ENCODE measurements at regions of chr19 and their contacts with region 1.

Region 1: DNA sequence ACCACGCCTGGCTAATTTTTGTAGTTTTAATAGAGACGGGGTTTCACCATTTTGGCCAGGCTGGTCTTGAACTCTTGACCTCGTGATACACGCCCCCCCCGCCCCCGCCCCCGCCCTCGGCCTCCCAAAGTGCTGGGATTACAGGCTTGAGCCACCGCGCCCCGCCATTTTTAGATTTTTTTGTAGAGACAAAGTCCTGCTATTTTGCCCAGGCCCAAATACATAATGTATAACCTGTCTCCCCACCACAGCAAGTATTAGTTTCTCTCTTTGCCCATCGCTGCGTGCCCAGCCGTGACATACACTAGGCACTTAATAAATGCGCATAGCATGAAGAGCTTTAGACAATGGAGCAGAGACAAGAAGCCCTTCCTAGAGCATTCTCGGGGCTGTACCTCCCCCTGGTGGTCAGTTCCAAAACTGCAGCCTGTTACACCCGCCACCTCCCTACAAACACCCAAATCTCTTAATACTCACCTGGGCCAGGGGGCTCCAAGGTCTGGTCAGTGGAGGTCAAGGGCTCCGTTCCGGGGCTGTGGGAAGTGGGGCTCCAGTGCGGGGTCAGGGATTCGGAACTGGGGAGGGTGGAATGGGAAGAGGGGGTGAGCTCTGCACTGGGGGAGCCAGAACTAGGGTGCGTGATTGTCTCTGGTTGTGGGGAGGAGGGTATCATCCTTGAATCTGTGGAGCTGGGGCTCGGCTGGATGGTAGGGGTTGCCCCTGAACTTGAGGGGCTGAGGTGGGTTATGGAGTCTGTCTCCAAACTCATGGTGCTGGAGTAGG is 22.5 kb downstream of the IQCN start:
- DNase-seq: no peak
- H3K4me3 ChIP-seq: no peak overlapping the region
- H3K27ac ChIP-seq: no peak overlapping the region
- H3K4me1 ChIP-seq: peaks cover 5 to 39% (median 7%) of the 10 kb centered on the region in 3 donors
- H3K27me3 ChIP-seq: peaks cover 0 to 12% (median 0%) of the 10 kb centered on the region in 4 donors
- CTCF ChIP-seq: peak; percentile 89 to 98 (median 96)
- POLR2A ChIP-seq: no peak

Region 2: DNA sequence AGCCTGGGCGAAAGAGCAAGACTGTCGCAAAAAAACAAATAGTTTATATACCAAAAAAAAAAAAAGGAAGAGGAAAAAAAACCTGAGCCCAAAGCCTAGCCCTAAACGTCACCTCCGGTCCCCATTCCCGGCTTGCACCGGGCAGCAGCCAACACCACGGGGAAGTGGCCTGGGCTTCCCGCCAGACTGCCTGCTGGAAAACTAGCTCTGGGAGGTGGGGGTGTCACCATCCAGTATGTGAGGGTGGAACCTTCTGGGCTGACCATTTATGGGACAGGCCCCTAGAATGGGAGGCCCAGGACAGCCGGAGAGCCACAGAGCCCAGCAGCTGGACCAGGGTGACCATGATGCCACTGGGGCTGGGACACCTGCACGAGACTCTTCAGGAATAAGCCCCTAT is 202.4 kb before region 1 on chr19:
- intact Hi-C with region 1: no loop called
- DNase-seq: no peak
- H3K4me3 ChIP-seq: no peak overlapping the region
- H3K27ac ChIP-seq: peak overlapping the region; percentile 65 to 89 (median 80)
- H3K4me1 ChIP-seq: peaks cover 17 to 72% (median 39%) of the 10 kb centered on the region in 3 donors
- H3K27me3 ChIP-seq: peaks cover 0 to 16% (median 2%) of the 10 kb centered on the region in 4 donors
- CTCF ChIP-seq: no peak
- POLR2A ChIP-seq: no peak

Region 3: DNA sequence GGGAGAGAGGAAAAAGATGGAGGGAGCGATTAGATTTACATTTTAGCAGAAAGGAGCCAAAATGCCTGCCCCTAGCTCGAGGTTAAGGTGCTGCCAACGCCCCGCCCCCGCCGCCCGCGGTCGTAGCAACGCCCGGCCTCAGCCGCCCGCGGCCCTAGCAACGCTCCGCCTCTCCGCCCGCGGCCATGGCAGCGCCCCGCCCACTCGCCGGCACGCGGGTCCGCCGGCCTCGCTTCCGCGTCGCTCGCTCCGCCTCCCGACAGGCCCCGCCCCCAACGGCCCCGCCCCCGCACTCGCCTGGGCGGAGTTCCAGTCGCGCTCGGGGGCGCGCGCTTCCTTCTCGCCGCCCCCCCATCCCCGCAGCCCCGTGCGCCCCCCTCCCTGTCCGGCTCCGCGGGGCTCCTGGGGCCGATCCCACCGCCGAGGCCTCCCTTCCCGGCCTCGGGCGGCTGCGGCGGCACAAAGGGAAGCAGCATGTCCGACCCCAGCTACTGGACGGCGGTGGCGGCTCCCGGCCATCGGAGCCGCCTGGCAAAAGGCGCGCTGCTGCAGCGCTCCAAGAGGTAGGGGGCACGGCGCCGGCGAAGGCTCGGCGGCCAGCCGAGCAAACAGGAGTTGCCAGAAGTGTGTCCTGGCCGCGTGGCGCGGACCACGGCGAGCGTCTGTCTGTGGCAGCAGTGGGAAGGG is 133.9 kb before region 1 on chr19:
- intact Hi-C with region 1: loop called (anchors 10 kb)
- DNase-seq: no peak
- H3K4me3 ChIP-seq: peak overlapping the region; percentile 54 to 81 (median 71)
- H3K27ac ChIP-seq: peak overlapping the region; percentile 65 to 87 (median 75)
- H3K4me1 ChIP-seq: peaks cover 19 to 39% (median 22%) of the 10 kb centered on the region in 3 donors
- H3K27me3 ChIP-seq: no peaks in the 10 kb centered on the region
- CTCF ChIP-seq: no peak
- POLR2A ChIP-seq: peak in 1 of 4 donors; percentile 6

Region 4: GRCh38 chr19:18194554-18195238 is 57.1 kb before region 1 on chr19:
- intact Hi-C with region 1: loop called (anchors 5 kb)
- DNase-seq: no peak
- H3K4me3 ChIP-seq: peak overlapping the region in 3 of 4 donors; percentile 13 to 89 (median 84)
- H3K27ac ChIP-seq: peak overlapping the region; percentile 12 to 93 (median 60)
- H3K4me1 ChIP-seq: peaks cover 24 to 34% (median 24%) of the 10 kb centered on the region in 3 donors
- H3K27me3 ChIP-seq: no peaks in the 10 kb centered on the region
- CTCF ChIP-seq: no peak
- POLR2A ChIP-seq: no peak

Region 5: DNA sequence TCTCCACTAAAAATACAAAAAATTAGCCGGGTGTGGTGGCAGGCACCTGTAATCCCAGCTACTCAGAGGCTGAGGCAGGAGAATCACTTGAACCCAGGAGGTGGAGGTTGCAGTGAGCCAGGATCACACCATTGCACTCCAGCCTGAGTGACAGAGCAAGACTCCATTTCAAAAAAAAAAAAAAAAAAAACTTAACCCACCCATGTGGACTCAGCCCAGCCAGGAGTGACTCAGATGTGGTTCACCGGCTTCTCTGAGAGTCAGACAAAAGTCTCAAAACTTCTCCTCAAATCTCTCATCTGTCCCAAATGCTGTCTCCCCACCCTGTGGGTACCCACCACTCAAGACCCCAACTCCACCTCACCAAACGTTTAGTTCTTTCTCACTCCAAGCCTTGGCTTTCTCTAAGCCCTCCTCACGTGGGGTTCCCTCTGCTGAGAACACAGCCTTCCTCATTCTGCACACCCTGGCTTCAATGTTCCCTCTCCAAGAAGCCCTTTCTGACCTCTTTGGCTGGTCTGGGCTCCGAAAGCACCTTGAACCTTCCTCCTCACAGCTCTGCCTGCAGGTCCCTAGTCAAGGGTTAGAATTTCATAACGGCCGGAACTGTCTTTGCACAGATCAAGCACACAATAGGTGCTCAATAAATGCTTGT is 36.9 kb before region 1 on chr19:
- intact Hi-C with region 1: loop called (anchors 5 kb)
- DNase-seq: no peak
- H3K4me3 ChIP-seq: no peak overlapping the region
- H3K27ac ChIP-seq: no peak overlapping the region
- H3K4me1 ChIP-seq: no peaks in the 10 kb centered on the region
- H3K27me3 ChIP-seq: peaks cover 0 to 11% (median 0%) of the 10 kb centered on the region in 4 donors
- CTCF ChIP-seq: no peak
- POLR2A ChIP-seq: no peak

Region 6: GRCh38 chr19:18317918-18318841 is 66.4 kb after region 1 on chr19:
- intact Hi-C with region 1: no loop called
- DNase-seq: no peak
- H3K4me3 ChIP-seq: peak overlapping the region in 1 of 4 donors; percentile 24
- H3K27ac ChIP-seq: peak overlapping the region; percentile 55 to 97 (median 88)
- H3K4me1 ChIP-seq: peaks cover 25 to 52% (median 40%) of the 10 kb centered on the region in 3 donors
- H3K27me3 ChIP-seq: no peaks in the 10 kb centered on the region
- CTCF ChIP-seq: no peak
- POLR2A ChIP-seq: no peak